Gastrocnemius medialis (tissue), 4 donors: ENCODE measurements at regions of chr13 and their contacts with region 1.

Region 1: GRCh38 chr13:80342471-80343380 is 1.8 kb upstream of the SPRY2 start:
- DNase-seq: peak; percentile 64 to 78
- ATAC-seq: peak; percentile 42 to 46
- H3K4me3 ChIP-seq: peak overlapping the region; percentile 69 to 94 (median 90)
- H3K27ac ChIP-seq: peak overlapping the region; percentile 91 to 99 (median 95)
- H3K4me1 ChIP-seq: peaks cover 17 to 30% of the 10 kb centered on the region in 2 donors
- H3K27me3 ChIP-seq: no peaks in the 10 kb centered on the region
- CTCF ChIP-seq: peak; percentile 96 to 99 (median 98)
- POLR2A ChIP-seq: peak; percentile 11 to 48

Region 2: GRCh38 chr13:79480954-79481684 is 861.6 kb before region 1 on chr13 and contains the start of gene NDFIP2:
- in situ Hi-C with region 1: no loop called
- intact Hi-C with region 1: loop called (anchors 5 kb)
- DNase-seq: peak; percentile 62 to 80
- ATAC-seq: peak; percentile 81 to 84
- H3K4me3 ChIP-seq: peak within 1 kb of the TSS; percentile 80 to 97 (median 86)
- H3K27ac ChIP-seq: peak within 1 kb of the TSS; percentile 80 to 88 (median 86)
- H3K4me1 ChIP-seq: peaks cover 48 to 49% of the 10 kb centered on the region in 2 donors
- H3K27me3 ChIP-seq: no peaks in the 10 kb centered on the region
- CTCF ChIP-seq: peak in 1 of 5 experiments; percentile 22
- POLR2A ChIP-seq: peak; percentile 54 to 70
- total RNA-seq, gene NDFIP2: 21.8 to 47.8 (median 31.9) TPM

Region 3: DNA sequence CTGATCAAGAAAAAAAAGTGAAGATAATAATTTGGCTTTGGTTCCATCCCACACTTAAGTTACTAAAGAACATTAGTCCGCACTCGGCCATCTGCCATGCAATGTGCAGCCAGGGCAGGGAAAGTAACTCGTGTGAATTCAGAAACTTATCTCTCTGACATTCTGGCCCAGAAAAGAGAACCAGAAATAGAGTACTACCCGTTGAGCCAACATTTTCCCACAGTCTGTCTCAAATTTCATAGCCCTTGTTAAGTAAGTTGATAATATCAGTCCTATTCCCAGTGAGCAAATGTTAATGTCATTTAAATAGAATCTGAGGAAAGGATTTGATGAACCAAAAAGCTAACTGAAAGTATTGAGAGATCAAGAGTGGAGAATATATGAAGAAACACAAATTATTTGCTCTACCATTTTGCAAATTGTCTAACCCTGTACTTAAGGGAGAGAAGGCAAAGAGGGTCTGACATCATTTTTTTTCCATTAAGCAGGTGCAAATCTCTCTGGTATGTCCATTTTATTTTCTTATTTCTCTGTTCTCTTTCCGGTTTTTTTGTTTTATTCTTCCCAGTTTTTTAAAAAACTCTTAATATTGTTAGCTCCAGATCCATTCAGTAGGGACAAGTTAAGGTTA is 705.5 kb before region 1 on chr13:
- in situ Hi-C with region 1: loop called in 2 of 4 experiments (anchors 5 to 10 kb)
- intact Hi-C with region 1: loop called (anchors 5 kb)
- DNase-seq: peak; percentile 69 to 80
- ATAC-seq: peak; percentile 99 to 100
- H3K4me3 ChIP-seq: peak overlapping the region in 2 of 4 donors; percentile 20 to 27
- H3K27ac ChIP-seq: peak overlapping the region; percentile 9 to 83 (median 73)
- H3K4me1 ChIP-seq: peaks cover 16 to 31% of the 10 kb centered on the region in 2 donors
- H3K27me3 ChIP-seq: no peaks in the 10 kb centered on the region
- CTCF ChIP-seq: no peak
- POLR2A ChIP-seq: no peak

Region 4: DNA sequence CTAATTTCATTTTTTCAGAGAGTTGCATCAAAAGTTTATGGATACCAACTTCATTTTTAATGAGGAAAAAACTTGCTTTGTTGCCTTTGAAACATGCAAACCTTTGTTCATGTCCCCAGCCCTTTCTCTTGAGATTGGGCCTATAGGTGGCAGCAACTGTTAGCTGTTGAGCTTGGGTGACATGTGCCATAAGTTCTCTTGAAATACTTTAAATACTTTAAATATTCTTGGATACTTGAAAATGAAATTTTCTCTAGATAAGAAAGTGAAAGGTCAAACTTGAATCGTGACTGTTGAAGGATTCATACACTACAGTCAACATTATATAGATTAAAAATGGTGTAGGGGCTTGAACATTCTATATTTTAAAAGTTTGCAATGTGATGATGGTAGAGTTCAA is 566.9 kb before region 1 on chr13:
- in situ Hi-C with region 1: no loop called
- intact Hi-C with region 1: loop called (anchors 10 kb)
- DNase-seq: no peak
- ATAC-seq: no peak
- H3K4me3 ChIP-seq: no peak overlapping the region
- H3K27ac ChIP-seq: no peak overlapping the region
- H3K4me1 ChIP-seq: peaks cover 0 to 4% of the 10 kb centered on the region in 2 donors
- H3K27me3 ChIP-seq: no peaks in the 10 kb centered on the region
- CTCF ChIP-seq: peak in 4 of 5 experiments; percentile 8 to 52 (median 40)
- POLR2A ChIP-seq: no peak

Region 5: DNA sequence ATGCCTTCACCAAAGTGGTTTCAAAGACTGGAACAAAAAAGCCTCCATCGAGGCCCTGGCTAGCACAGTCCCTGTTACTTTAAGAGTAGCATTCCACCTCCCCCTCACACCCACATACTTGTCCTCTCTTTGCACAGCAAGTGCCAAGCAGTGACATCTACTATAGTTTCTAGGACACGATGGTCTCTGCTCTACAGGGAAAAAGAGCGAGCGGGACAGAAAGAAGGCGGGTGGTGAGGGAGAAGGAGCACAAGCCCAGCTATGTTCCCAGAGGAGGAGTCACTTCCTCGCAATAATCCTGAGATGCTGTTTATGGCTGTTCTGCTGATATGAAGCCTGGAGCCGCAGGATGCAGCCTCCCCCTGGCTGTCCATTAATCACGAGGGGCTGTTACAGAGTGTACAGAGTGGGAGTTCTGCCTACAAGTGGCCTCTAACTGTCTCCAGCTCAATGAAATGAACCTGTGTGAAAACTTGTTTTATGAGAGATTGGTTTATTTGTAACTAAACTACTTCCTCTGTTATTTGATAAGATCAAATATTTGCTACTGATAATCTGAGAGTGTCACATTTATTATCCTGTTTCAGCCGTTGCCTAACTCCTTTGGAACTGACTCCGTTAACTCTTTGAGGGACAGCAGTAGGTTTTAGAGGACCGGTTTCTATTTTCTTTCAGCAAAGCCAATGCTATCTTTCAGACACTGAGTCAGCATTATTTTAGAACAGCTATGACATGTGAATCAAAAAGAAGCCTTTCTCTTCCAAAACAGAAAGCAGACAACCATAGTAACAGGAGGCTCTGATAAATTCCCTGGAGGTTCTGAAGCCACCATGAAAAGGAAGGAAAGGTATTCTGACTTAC is 209.8 kb before region 1 on chr13:
- in situ Hi-C with region 1: loop called in 1 of 4 experiments (anchors 10 kb)
- intact Hi-C with region 1: loop called (anchors 5 kb)
- DNase-seq: peak; percentile 59 to 62
- ATAC-seq: peak; percentile 89 to 90
- H3K4me3 ChIP-seq: peak overlapping the region; percentile 9 to 47 (median 38)
- H3K27ac ChIP-seq: peak overlapping the region; percentile 62 to 79 (median 71)
- H3K4me1 ChIP-seq: peaks cover 29 to 39% of the 10 kb centered on the region in 2 donors
- H3K27me3 ChIP-seq: no peaks in the 10 kb centered on the region
- CTCF ChIP-seq: no peak
- POLR2A ChIP-seq: peak in 1 of 2 donors; percentile 29

Region 6: DNA sequence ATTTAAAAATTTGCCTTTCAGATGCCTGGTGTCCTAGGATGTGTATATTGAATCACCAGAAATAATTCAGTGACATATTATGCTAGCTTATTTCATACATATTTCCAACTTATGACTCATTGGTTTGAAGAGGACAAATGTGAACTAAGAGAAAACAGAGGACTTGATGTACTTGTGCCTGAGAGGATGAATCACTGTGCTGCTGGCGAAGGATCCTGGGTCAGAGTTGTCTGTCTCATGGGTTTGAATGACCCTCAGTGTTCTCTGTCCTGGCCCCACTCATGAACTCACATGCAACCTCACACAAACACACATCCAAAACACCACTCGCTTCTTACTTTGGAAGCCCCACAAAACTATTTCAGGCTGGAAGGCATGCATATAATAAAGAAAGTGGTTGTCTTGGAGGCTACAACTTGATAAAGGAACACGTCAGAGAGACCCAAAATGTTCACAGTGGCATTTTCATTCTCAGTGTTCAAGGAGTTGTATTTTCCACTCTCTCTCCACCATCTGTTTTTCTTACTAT is 127.2 kb after region 1 on chr13:
- in situ Hi-C with region 1: no loop called
- intact Hi-C with region 1: loop called (anchors 10 kb)
- DNase-seq: peak; percentile 84 to 89
- ATAC-seq: peak; percentile 96 to 98
- H3K4me3 ChIP-seq: no peak overlapping the region
- H3K27ac ChIP-seq: peak overlapping the region; percentile 77 to 82 (median 80)
- H3K4me1 ChIP-seq: peaks cover 15 to 21% of the 10 kb centered on the region in 2 donors
- H3K27me3 ChIP-seq: no peaks in the 10 kb centered on the region
- CTCF ChIP-seq: no peak
- POLR2A ChIP-seq: no peak

Region 7: DNA sequence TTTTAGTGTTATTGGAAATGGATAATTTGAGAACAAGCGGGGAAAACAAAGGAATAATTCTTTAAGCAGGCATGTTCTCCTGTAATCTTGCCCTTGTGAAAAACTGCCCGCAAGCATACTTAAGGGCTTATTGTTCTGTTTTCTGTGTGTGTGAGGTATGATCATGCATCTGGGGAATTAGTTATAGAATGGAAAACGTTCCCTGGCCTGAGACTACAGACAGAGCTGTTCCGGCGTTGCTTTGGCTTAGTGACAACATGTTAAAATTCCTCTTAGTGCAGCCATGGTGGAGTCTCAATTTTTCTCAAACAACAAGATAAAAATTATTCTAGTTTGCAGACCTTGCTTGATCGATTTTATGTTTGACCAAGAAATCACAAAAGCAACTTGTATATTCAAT is 558.4 kb after region 1 on chr13:
- in situ Hi-C with region 1: no loop called
- intact Hi-C with region 1: no loop called
- DNase-seq: no peak
- ATAC-seq: peak in 1 of 2 donors; percentile 74
- H3K4me3 ChIP-seq: no peak overlapping the region
- H3K27ac ChIP-seq: peak overlapping the region; percentile 22 to 55 (median 53)
- H3K4me1 ChIP-seq: no peaks in the 10 kb centered on the region
- H3K27me3 ChIP-seq: no peaks in the 10 kb centered on the region
- CTCF ChIP-seq: no peak
- POLR2A ChIP-seq: no peak